ENCODE measurements at regions of chr2 and their contacts with region 1.

Region 1: DNA sequence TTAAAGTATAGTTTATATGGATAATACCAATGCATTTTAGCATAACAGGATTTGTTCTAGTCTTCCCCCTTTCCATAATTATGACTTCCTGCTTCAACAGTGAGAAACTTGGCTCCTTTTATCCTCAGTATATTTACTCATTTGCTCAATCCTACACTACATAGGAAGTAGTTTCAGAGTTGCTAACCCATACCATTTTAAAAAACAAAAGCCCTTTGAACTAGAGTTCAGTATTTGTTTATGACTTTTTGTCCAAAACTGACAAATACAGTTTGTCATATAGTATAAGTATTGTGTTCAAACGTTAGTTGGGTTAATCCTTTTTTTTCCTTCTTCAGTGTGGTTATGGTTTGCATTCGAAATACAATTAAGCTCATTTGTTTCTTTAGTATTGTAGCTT is 5.9 kb upstream of the DNAJC27 start:
- DNase-seq: no peak
- H3K4me3 ChIP-seq: no peak overlapping the region
- H3K27ac ChIP-seq: no peak overlapping the region
- H3K4me1 ChIP-seq: peaks cover 0 to 23% (median 11%) of the 10 kb centered on the region in 4 donors
- H3K27me3 ChIP-seq: no peaks in the 10 kb centered on the region
- CTCF ChIP-seq: no peak
- EP300 ChIP-seq: no peak
- POLR2A ChIP-seq: no peak

Region 2: GRCh38 chr2:24886691-24887304 is 90.8 kb before region 1 on chr2:
- intact Hi-C with region 1: no loop called
- DNase-seq: no peak
- H3K4me3 ChIP-seq: no peak overlapping the region
- H3K27ac ChIP-seq: peak overlapping the region in 2 of 4 donors; percentile 20 to 48
- H3K4me1 ChIP-seq: no peaks in the 10 kb centered on the region
- H3K27me3 ChIP-seq: no peaks in the 10 kb centered on the region
- CTCF ChIP-seq: no peak
- EP300 ChIP-seq: no peak
- POLR2A ChIP-seq: no peak

Region 3: GRCh38 chr2:24930768-24931167 is 46.9 kb before region 1 on chr2:
- intact Hi-C with region 1: no loop called
- DNase-seq: no peak
- H3K4me3 ChIP-seq: no peak overlapping the region
- H3K27ac ChIP-seq: no peak overlapping the region
- H3K4me1 ChIP-seq: peaks cover 0 to 12% (median 12%) of the 10 kb centered on the region in 4 donors
- H3K27me3 ChIP-seq: peaks cover 0 to under 1% (median 0%) of the 10 kb centered on the region in 3 donors
- CTCF ChIP-seq: no peak
- EP300 ChIP-seq: no peak
- POLR2A ChIP-seq: no peak

Region 4: GRCh38 chr2:25115902-25116301 is 138.3 kb after region 1 on chr2:
- intact Hi-C with region 1: no loop called
- DNase-seq: no peak
- H3K4me3 ChIP-seq: no peak overlapping the region
- H3K27ac ChIP-seq: no peak overlapping the region
- H3K4me1 ChIP-seq: peaks cover 0 to 6% (median 2%) of the 10 kb centered on the region in 4 donors
- H3K27me3 ChIP-seq: no peaks in the 10 kb centered on the region
- CTCF ChIP-seq: no peak
- EP300 ChIP-seq: no peak
- POLR2A ChIP-seq: no peak

Region 5: DNA sequence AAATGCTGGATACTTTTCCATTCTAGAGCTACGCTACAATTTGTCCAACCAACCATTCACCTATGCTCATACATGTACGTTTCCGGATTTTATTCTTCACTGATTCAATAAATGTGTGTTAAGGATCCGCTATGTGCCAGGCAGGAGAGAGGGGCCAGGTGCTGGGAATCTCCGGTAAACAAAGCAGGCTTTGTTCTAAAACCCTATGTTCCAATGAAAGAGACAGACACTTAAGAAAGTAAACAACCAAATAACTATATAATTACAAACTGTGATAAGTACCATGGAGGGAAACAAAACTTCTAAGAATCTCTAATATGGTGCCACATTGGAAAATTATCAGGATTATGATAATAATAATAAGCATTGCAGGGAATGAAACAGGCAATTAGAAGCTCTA is 212.9 kb after region 1 on chr2:
- intact Hi-C with region 1: loop called (anchors 5 kb)
- DNase-seq: no peak
- H3K4me3 ChIP-seq: no peak overlapping the region
- H3K27ac ChIP-seq: no peak overlapping the region
- H3K4me1 ChIP-seq: no peaks in the 10 kb centered on the region
- H3K27me3 ChIP-seq: no peaks in the 10 kb centered on the region
- CTCF ChIP-seq: no peak
- EP300 ChIP-seq: no peak
- POLR2A ChIP-seq: no peak